Mammary epithelial cell (primary cell): ENCODE measurements at regions of chr2 and their contacts with region 1.

Region 1: GRCh38 chr2:215531284-215531683 is 95.4 kb upstream of the FN1 start:
- DNase-seq: peak; percentile 84
- H3K4me3 ChIP-seq: no peak overlapping the region
- H3K27ac ChIP-seq: peak overlapping the region; percentile 98
- H3K4me1 ChIP-seq: peaks cover 51% of the 10 kb centered on the region
- H3K27me3 ChIP-seq: no peaks in the 10 kb centered on the region
- CTCF ChIP-seq: no peak

Region 2: GRCh38 chr2:215680605-215681598 is 149.6 kb after region 1 on chr2:
- CTCF ChIA-PET with region 1: no interaction called
- dilution Hi-C with region 1: no loop called
- in situ Hi-C with region 1: no loop called
- intact Hi-C with region 1: loop called (anchors 1 kb)
- DNase-seq: peak; percentile 100
- H3K4me3 ChIP-seq: no peak overlapping the region
- H3K27ac ChIP-seq: peak overlapping the region; percentile 88
- H3K4me1 ChIP-seq: peaks cover 16% of the 10 kb centered on the region
- H3K27me3 ChIP-seq: no peaks in the 10 kb centered on the region
- CTCF ChIP-seq: no peak